Right cardiac atrium (tissue), 5 donors: ENCODE measurements at regions of chr2 and their contacts with region 1.

Region 1: GRCh38 chr2:64291181-64291580 is 147.0 kb upstream of the PELI1 start:
- DNase-seq: peak in 1 of 3 donors; percentile 36
- ATAC-seq: peak in 1 of 2 donors; percentile 81
- H3K4me3 ChIP-seq: no peak overlapping the region
- H3K27ac ChIP-seq: no peak overlapping the region
- H3K4me1 ChIP-seq: no peaks in the 10 kb centered on the region
- H3K27me3 ChIP-seq: no peaks in the 10 kb centered on the region

Region 2: DNA sequence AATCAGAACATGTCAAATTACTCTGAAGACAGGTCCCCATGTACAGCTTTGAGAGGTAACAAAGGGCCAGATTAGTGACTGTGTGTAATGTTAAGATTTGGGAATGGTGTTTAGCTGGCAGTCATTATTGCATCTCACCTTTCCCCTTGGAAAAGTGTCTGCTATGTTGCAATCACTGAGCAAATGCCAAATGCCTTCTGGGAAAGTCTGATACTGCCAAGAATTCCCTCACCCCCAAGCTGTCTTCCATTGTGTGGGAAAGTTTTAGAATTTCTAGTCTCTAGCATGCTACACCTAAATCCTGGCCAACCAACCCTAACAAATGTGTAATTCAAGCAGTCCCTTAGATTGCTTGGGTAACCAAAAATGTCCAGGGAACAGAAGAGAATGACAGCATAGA is 133.4 kb before region 1 on chr2:
- intact Hi-C with region 1: loop called in 1 of 4 experiments (anchors 10 kb)
- DNase-seq: no peak
- ATAC-seq: peak; percentile 50 to 67
- H3K4me3 ChIP-seq: no peak overlapping the region
- H3K27ac ChIP-seq: no peak overlapping the region
- H3K4me1 ChIP-seq: no peaks in the 10 kb centered on the region
- H3K27me3 ChIP-seq: no peaks in the 10 kb centered on the region

Region 3: DNA sequence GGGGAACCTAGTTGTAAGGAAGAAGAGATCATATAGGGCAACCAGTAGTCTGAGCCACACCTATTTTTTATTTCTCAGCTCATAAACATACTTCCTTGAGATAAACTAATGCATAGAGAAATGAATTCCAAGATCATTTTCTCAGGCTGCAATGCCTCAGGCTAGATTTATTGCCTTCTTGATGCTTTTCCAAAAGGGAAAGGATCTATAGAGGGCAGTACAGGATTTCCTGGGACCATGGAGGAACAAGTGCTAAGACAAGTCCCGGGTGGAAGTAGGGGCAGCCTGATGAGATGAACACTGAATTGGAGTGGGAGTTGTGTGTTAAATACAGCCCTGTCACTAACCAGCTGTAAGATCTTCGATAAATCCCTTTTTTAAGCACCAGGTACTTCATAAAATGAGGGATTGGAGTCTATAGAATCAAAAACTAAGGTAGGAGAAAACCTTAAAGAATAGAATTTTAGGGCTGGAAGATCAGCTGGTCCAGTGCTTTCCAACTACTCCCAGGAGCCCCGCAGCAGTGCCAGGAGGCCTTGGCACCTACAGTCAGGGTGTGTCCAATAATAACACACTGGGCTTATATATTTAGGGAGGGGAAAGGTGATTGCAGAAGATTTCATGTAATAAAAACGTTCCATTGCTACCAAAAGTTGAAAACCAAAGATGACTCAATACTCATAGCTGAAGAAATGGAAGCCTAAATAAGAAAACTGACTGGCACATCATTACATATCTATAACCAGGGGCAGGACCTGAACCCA is 304.4 kb after region 1 on chr2:
- intact Hi-C with region 1: no loop called
- DNase-seq: no peak
- ATAC-seq: no peak
- H3K4me3 ChIP-seq: no peak overlapping the region
- H3K27ac ChIP-seq: no peak overlapping the region
- H3K4me1 ChIP-seq: peaks cover 1% of the 10 kb centered on the region
- H3K27me3 ChIP-seq: no peaks in the 10 kb centered on the region